CD14-positive monocyte (primary cell): ENCODE measurements at regions of chr17 and their contacts with region 1.

Region 1: GRCh38 chr17:59440784-59441441 is 109.5 kb downstream of the YPEL2 start:
- DNase-seq: peak; percentile 77 to 87 (median 85)
- H3K4me3 ChIP-seq: peak overlapping the region in 1 of 3 experiments; percentile 44
- H3K4me3 Mint-ChIP-seq: peak overlapping the region; percentile 21 to 63
- H3K27ac ChIP-seq: no peak overlapping the region
- H3K27ac Mint-ChIP-seq: peak overlapping the region in 2 of 7 donors; percentile 58 to 61
- H3K4me1 ChIP-seq: peaks cover 41 to 47% of the 10 kb centered on the region in 2 donors
- H3K4me1 Mint-ChIP-seq: peaks cover 52% of the 10 kb centered on the region
- H3K27me3 ChIP-seq: no peaks in the 10 kb centered on the region
- H3K27me3 Mint-ChIP-seq: peaks cover 0 to 5% (median 1%) of the 10 kb centered on the region in 3 donors
- CTCF ChIP-seq: peak; percentile 84

Region 2: DNA sequence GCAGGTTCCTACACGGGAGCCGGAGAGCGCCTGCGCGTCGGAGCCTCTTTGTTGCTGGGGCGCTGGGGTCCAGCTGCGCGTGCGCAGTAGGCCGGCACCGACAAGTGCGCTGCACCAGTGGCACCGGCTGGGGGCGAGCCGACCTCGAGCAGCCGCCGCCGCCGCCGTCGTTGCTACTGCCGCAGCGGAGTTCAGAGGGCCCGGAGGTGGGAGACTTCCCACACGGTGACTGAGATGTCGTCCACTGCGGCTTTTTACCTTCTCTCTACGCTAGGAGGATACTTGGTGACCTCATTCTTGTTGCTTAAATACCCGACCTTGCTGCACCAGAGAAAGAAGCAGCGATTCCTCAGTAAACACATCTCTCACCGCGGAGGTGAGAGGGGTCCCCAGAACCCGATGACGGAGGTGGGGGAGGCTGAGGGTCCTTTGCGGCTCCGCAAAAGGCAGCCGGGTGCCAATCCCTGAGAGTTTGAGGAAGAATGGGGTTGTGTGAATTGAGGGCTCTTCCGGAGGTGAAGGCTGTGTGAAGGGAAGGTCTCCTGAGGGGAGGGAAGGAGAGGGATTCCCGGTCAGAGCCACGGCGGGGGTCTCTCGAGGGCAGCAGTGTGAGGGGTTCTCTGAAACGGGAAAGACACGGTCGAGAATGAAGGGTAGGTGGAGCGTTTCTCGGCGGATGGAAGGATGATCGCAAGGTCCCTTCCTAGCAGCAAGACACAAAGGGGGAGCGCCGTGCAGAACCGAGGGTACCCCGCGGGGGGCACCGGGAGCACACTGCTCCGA is 220.3 kb before region 1 on chr17 and contains the start of gene GDPD1:
- intact Hi-C with region 1: loop called in 1 of 2 experiments (anchors 5 kb)
- DNase-seq: peak; percentile 92 to 96 (median 95)
- H3K4me3 ChIP-seq: peak within 1 kb of the TSS; percentile 77 to 94 (median 89)
- H3K4me3 Mint-ChIP-seq: peak within 1 kb of the TSS; percentile 99 to 100
- H3K27ac ChIP-seq: peak within 1 kb of the TSS in 1 of 2 donors; percentile 56
- H3K27ac Mint-ChIP-seq: peak within 1 kb of the TSS in 6 of 7 donors; percentile 6 to 91 (median 68)
- H3K4me1 ChIP-seq: peaks cover 13 to 20% of the 10 kb centered on the region in 2 donors
- H3K4me1 Mint-ChIP-seq: peaks cover 11% of the 10 kb centered on the region
- H3K27me3 ChIP-seq: no peaks in the 10 kb centered on the region
- H3K27me3 Mint-ChIP-seq: peaks cover 0 to 2% (median 0%) of the 10 kb centered on the region in 3 donors
- CTCF ChIP-seq: peak; percentile 71
- polyA plus RNA-seq, gene GDPD1: 0.50 to 1.6 (median 1.6) TPM

Region 3: DNA sequence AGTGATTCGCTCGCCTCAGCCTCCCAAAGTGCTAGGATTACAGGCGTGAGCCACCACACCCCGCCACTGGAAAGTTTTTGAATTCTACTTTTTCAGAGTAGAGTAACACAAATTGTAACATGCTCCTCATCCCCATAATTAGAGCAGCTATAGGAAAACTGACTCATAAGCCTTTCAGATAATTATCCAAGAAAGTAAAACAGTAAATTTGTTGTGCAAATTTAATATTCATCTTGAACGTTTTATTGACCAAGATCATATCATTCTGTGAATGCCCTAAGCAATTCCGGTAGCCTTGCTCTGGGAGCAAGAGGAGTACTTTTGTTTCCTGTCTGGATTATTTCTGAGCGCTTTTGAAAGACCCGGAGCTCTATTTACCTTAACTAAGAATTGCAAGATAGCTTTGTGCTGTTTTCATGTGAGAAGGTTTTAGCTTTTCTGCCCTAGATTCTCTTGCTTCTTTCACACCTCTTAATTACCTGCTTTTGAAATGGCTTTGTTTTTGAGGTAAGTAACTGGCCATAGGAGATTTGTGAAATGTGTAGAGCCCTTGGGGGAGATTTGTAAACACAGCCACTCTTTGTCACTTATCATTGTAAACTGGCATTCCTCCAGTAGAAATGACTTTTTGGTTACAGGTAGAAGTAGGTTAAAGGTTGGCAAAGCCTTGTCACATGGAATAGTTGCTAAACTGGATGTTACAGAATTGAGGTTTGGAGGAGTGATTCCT is 144.0 kb before region 1 on chr17:
- intact Hi-C with region 1: no loop called
- DNase-seq: no peak
- H3K4me3 ChIP-seq: no peak overlapping the region
- H3K4me3 Mint-ChIP-seq: no peak overlapping the region
- H3K27ac ChIP-seq: no peak overlapping the region
- H3K27ac Mint-ChIP-seq: peak overlapping the region in 1 of 7 donors; percentile 64
- H3K4me1 ChIP-seq: peaks cover 6 to 10% of the 10 kb centered on the region in 2 donors
- H3K4me1 Mint-ChIP-seq: peaks cover 10% of the 10 kb centered on the region
- H3K27me3 ChIP-seq: no peaks in the 10 kb centered on the region
- H3K27me3 Mint-ChIP-seq: peaks cover 0 to 2% (median 1%) of the 10 kb centered on the region in 3 donors
- CTCF ChIP-seq: no peak

Region 4: DNA sequence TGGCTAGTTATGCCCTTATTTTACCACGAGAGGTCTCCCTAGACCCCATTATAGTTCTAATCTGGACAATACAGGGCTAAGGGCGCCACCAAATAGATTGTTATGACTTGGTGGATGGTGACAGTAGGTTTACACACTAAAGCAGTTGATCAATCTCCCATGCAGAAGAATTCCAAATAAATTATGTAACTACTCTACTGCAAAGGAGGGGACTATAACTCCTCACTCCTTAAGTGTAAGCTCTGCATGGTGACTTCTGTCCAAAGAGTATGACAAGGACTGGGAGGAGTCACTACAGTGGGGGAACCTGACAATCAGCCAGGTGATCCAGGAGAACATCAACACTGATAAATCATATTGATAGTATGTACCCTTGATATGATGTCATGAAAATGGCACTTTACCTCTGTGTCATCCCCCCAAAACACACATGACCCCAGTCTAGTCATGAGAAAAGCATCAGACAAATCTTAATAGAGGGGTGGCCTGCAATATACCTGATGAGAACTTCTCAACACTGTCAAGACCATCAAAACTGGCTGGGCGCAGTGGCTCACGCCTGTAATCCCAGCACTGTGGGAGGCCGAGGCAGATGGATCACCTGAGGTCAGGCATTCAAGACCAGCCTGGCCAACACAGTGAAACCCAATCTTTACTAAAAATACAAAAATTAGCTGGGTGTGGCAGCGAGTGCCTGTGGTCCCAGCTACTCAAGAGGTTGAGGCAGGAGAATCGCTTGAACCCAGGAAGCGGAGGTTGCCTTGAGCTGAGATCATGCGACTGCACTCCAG is 129.6 kb before region 1 on chr17:
- intact Hi-C with region 1: loop called (anchors 1 to 5 kb)
- DNase-seq: peak; percentile 48 to 75 (median 61)
- H3K4me3 ChIP-seq: no peak overlapping the region
- H3K4me3 Mint-ChIP-seq: no peak overlapping the region
- H3K27ac ChIP-seq: no peak overlapping the region
- H3K27ac Mint-ChIP-seq: peak overlapping the region in 1 of 7 donors; percentile 63
- H3K4me1 ChIP-seq: no peaks in the 10 kb centered on the region
- H3K4me1 Mint-ChIP-seq: peaks cover 8% of the 10 kb centered on the region
- H3K27me3 ChIP-seq: no peaks in the 10 kb centered on the region
- H3K27me3 Mint-ChIP-seq: peaks cover 0 to 2% (median 0%) of the 10 kb centered on the region in 3 donors
- CTCF ChIP-seq: peak; percentile 92

Region 5: DNA sequence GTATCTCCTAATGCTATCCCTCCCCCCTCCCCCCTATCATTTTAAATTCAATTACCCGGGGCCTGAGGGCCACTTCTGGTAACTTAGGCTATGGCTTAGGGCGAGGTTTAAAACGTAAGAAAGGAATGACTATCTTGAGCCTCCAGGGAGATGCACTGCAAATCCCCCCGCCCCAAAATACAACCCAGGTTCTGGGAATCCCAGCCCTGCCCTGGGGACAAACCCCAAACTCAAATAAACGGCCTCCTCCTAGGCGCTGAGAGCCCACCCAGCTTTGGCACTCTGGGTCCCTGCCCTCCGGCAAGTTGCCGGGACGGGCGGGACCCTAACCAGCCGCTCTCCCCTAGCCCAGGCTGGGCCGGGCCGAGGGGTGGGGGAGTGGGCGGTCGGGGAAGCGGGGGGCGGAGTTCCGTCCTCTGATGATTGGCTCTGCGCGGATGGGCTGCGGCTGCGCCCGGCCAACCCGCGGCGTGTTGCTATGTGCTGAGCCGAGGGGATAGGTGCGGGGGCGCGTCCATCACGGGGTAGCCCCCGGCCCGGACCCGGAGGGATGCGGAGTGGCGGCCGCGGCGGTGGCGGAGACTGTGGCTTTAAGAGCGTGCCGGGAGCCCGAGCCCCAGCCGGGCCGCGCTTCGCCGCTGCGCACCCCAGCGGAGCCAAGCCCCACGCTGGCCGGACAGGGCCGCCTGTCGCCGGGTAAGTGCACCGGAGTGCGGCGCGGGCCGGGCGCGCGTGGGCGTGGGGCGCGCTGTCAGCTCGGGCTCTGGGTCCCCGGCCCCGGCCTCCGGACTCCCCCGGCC is 109.6 kb before region 1 on chr17 and contains the start of gene YPEL2:
- intact Hi-C with region 1: loop called (anchors 5 kb)
- DNase-seq: peak; percentile 85 to 91 (median 88)
- H3K4me3 ChIP-seq: peak within 1 kb of the TSS; percentile 71 to 92 (median 91)
- H3K4me3 Mint-ChIP-seq: peak within 1 kb of the TSS; percentile 97 to 100
- H3K27ac ChIP-seq: peak within 1 kb of the TSS; percentile 71 to 90
- H3K27ac Mint-ChIP-seq: peak within 1 kb of the TSS; percentile 92 to 98 (median 96)
- H3K4me1 ChIP-seq: peaks cover 49 to 60% of the 10 kb centered on the region in 2 donors
- H3K4me1 Mint-ChIP-seq: peaks cover 68% of the 10 kb centered on the region
- H3K27me3 ChIP-seq: no peaks in the 10 kb centered on the region
- H3K27me3 Mint-ChIP-seq: no peaks in the 10 kb centered on the region
- CTCF ChIP-seq: no peak
- polyA plus RNA-seq, gene YPEL2: 21.5 to 63.1 (median 25.1) TPM